Cardiac septum (tissue), 1 donor: ENCODE measurements at regions of chr13 and their contacts with region 1.

Region 1: DNA sequence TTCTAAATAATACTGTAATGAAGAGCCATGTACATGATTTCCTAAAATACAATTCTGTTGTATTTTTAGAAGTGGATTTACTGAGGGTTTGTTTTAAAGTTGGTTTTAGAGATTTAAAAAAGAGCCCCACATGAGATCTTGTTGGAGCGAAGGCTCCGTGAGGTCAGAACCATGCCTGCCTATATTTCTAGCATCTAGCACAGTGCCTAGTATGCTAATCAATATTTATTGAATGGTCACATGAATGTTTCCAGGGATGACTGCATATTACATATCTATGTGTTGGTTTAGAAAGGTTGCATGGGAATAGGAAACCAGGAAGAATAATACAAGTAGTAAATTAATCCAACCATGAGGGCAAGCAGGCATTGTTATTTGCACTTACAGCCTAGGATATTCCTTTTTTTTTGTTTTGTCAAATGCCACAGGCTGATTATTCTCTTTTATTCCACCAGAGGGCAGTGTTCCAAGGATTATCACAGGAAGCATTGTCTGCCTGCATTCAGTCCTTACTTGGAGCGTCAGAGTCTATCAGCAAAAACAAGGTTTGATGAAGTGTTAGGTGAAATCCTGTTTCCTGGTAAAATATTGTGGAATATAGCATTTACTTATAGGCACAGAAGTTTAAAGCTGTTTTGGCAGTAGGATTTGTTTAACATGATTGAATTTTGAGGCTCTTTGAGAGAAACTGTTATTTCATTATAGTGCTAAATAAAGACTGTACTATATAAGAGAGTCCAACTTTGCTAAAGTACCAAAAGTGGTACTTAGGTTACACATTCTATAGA is 46.8 kb downstream of the COG3 start:
- DNase-seq: no peak

Region 2: DNA sequence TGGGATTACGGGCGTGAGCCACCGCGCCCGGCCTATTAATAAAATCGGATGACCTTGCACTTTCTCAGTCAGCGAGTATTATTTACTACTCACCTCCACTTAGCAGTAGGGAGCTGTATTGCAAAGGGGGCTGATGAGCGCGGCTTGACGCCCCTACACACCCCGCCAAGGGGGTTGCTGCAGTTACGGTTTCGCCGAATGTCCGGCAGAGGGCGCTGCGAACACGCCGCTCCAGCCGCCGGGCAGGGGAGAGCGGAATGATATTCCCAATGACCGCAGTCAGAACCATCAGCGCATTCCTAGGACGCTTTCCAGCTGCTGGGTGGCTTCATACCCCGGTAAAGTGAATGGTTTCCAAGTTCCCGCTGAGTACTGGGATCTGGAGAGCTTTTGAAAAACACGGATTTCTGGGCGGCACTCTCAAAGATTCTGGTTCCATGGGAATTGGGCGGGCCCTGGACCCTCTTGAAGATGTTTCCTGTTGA is 140.5 kb before region 1 on chr13:
- intact Hi-C with region 1: loop called (anchors 5 kb)
- DNase-seq: peak; percentile 85